ENCODE measurements at regions of chr2 and their contacts with region 1.

Region 1: GRCh38 chr2:133886735-133887660 is 318.7 kb upstream of the NCKAP5 start:
- DNase-seq: peak; percentile 94
- H3K4me3 ChIP-seq: no peak overlapping the region
- H3K27me3 ChIP-seq: peaks cover 4% of the 10 kb centered on the region; the same call in 1 of the 2 replicates
- CTCF ChIP-seq: peak; percentile 65

Region 2: GRCh38 chr2:134245340-134245984 is 358.5 kb after region 1 on chr2:
- CTCF ChIA-PET with region 1: interaction called, 10 read pairs
- POLR2A ChIA-PET with region 1: no interaction called
- DNase-seq: no peak
- H3K4me3 ChIP-seq: no peak overlapping the region
- H3K27me3 ChIP-seq: no peaks in the 10 kb centered on the region
- CTCF ChIP-seq: peak; percentile 87

Region 3: DNA sequence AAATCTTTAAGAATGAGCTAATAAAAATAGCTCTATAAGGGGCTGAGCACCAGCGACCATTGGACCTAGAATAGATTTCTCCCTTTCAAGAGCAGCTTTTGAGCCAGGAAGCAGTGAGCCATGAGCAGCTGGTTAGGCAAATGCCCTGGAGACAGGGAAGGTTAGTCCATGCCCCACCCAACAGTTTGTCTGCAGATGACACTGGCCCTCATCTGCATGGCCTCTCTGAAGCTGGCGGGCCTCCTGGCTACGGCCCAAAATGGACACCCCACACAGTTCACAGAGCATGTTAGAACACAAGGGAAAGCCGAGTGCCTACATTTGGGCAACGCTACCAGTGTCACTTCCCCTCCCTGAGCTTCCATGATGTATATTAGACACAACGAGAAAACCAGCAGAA is 567.9 kb after region 1 on chr2:
- CTCF ChIA-PET with region 1: interaction called, 53 read pairs
- POLR2A ChIA-PET with region 1: no interaction called
- DNase-seq: no peak
- H3K4me3 ChIP-seq: no peak overlapping the region
- H3K27me3 ChIP-seq: no peaks in the 10 kb centered on the region
- CTCF ChIP-seq: no peak